Activated CD4-positive, alpha-beta T cell treated with anti-CD3 and anti-CD28 coated beads for 36 hours (primary cell): ENCODE measurements at regions of chr3 and their contacts with region 1.

Region 1: GRCh38 chr3:3726549-3726948 is 72.7 kb upstream of the LRRN1 start:
- DNase-seq: no peak
- ATAC-seq: no peak
- H3K4me3 Mint-ChIP-seq: no peak overlapping the region
- H3K27ac Mint-ChIP-seq: no peak overlapping the region
- H3K4me1 Mint-ChIP-seq: no peaks in the 10 kb centered on the region
- H3K27me3 Mint-ChIP-seq: no peaks in the 10 kb centered on the region

Region 2: GRCh38 chr3:5275529-5275928 is 1549.0 kb after region 1 on chr3:
- CTCF ChIA-PET with region 1: no interaction called
- POLR2A ChIA-PET with region 1: interaction called, 10 read pairs
- intact Hi-C with region 1: no loop called
- DNase-seq: no peak
- ATAC-seq: no peak
- H3K4me3 Mint-ChIP-seq: no peak overlapping the region
- H3K27ac Mint-ChIP-seq: no peak overlapping the region
- H3K4me1 Mint-ChIP-seq: no peaks in the 10 kb centered on the region
- H3K27me3 Mint-ChIP-seq: no peaks in the 10 kb centered on the region